BJ (cell line): ENCODE measurements at regions of chr11 and their contacts with region 1.

Region 1: GRCh38 chr11:848380-848931 is 5.8 kb downstream of the TSPAN4 start:
- DNase-seq: no peak
- H3K4me3 ChIP-seq: no peak overlapping the region
- H3K27me3 ChIP-seq: no peaks in the 10 kb centered on the region
- CTCF ChIP-seq: peak; percentile 92

Region 2: DNA sequence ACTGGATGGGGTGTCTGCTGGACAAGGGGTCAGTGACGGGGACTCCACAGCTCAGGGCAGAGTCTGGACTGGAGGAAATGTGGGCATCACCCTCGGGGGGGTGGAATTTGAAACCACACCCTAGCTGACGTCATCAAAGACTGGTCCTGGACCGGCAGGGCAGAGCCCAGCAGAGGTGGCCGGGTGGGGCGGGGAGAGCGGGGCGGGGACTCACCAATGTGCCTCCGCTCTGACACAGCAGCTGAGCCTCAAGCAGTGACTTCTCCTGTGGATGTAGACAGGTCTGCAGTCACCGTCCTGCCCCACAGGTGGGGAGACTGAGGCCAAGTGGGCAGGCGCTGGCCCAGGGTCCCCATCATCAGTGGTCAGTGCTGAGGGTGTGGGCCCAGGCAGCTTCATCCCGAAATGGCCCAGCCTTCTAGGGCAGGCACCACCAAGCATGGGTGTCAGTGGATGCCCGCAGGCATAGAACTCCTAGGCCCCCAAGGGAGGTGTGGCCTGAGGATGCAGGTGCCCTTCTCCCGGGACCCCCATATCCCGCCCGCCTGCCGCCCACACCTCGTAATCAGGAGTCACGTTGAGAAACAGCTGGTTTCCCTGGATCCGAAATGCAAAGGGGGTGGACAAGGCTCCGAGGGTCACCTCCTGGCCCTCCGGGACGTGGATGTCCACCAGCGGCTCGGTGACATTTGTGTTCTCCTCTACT is 224.3 kb before region 1 on chr11:
- CTCF ChIA-PET with region 1: no interaction called
- POLR2A ChIA-PET with region 1: no interaction called
- DNase-seq: no peak
- H3K4me3 ChIP-seq: no peak overlapping the region
- H3K27me3 ChIP-seq: no peaks in the 10 kb centered on the region
- CTCF ChIP-seq: no peak

Region 3: DNA sequence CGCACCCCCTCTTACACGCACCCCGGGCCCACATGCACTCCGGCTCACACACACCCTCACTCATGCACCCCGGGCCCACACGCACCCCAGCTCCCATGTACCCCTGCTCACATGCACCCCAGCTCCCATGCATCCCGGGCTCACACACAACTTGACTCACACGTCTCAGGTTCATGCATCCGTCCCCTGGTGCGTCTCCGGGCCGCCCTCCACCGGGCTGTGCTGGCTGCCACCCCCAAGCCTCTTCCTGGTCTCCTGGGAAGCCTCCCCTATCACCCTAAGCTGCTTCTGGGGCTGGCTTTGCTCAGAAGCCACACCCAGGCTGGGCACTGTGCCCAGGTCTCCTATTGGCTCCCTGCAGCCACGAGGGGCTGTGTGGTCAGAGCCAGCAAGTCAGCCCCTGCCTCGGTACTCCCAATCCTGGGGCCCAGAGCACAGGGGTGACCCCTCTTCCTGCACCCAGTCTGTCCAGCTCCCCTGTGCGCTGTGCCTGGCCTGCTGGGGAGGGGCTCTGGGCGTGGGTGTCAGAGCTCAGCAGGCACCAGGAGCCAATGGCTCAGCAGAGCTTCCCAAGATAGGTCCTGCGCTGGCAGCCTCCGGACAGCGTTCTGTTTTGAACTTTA is 11.2 kb after region 1 on chr11:
- CTCF ChIA-PET with region 1: interaction called, 10 read pairs
- POLR2A ChIA-PET with region 1: no interaction called
- DNase-seq: no peak
- H3K4me3 ChIP-seq: no peak overlapping the region
- H3K27me3 ChIP-seq: no peaks in the 10 kb centered on the region
- CTCF ChIP-seq: no peak

Region 4: DNA sequence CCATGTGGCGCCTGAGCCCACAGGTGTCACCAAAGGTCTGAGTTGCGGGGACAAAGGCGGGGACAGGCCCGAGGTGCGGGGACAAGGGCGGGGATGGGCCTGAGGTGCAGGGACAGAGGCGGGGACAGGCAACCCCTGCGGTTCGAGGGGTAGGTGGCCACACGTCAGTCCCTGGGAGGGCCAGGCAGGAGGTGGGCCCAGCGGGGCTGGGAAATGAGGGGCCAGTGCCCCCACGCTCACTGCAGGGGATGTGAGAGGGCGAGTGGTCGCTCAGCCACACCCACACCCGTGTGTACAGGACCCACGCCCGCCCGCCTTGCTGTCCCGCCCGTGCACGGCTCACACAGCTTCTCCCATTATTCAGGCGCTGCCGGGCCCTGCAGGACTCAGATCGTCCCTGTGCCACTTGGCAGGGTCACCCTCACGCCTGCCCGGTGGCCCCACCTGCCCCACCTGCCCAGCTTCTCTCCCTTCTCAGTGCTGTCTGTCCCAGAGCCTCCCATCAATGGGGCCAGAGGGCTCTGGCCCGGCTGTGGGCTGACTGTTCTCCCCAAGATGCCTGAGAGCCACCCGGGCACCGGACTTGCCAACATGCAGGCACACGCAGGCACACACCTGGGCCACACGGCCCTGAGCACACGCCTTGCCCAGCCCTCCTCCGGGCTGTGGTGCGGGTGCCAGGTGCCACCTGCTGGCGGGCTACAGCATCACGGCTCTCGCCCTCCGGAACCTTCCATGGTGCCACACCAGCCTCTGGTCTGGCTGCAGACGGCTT is 202.3 kb after region 1 on chr11:
- CTCF ChIA-PET with region 1: interaction called, 20 read pairs
- POLR2A ChIA-PET with region 1: no interaction called
- DNase-seq: no peak
- H3K4me3 ChIP-seq: no peak overlapping the region
- H3K27me3 ChIP-seq: peaks cover 5% of the 10 kb centered on the region
- CTCF ChIP-seq: peak; percentile 95